Transverse colon (tissue), 4 donors: ENCODE measurements at regions of chr17 and their contacts with region 1.

Region 1: GRCh38 chr17:1915889-1916288 is 86.1 kb downstream of the RPA1 start:
- DNase-seq: no peak
- H3K4me3 ChIP-seq: no peak overlapping the region
- H3K27ac ChIP-seq: no peak overlapping the region
- H3K4me1 ChIP-seq: no peaks in the 10 kb centered on the region
- H3K27me3 ChIP-seq: peaks cover 65% of the 10 kb centered on the region
- CTCF ChIP-seq: no peak
- EP300 ChIP-seq: no peak
- POLR2A ChIP-seq: no peak

Region 2: GRCh38 chr17:2011411-2012371 is 95.8 kb after region 1 on chr17:
- in situ Hi-C with region 1: loop called in 2 of 4 experiments (anchors 10 kb)
- intact Hi-C with region 1: no loop called
- DNase-seq: peak; percentile 68
- H3K4me3 ChIP-seq: no peak overlapping the region
- H3K27ac ChIP-seq: peak overlapping the region; percentile 5 to 38 (median 25)
- H3K4me1 ChIP-seq: peaks cover 0 to 19% (median 10%) of the 10 kb centered on the region in 4 donors
- H3K27me3 ChIP-seq: no peaks in the 10 kb centered on the region
- CTCF ChIP-seq: no peak
- EP300 ChIP-seq: no peak
- POLR2A ChIP-seq: no peak